Activated CD8-positive, alpha-beta T cell treated with anti-CD3 and anti-CD28 coated beads, Interleukin-2, amount 10 ng/mL, durations not matched to agents 7 days and 5 days (primary cell): ENCODE measurements at regions of chr4 and their contacts with region 1.

Region 1: DNA sequence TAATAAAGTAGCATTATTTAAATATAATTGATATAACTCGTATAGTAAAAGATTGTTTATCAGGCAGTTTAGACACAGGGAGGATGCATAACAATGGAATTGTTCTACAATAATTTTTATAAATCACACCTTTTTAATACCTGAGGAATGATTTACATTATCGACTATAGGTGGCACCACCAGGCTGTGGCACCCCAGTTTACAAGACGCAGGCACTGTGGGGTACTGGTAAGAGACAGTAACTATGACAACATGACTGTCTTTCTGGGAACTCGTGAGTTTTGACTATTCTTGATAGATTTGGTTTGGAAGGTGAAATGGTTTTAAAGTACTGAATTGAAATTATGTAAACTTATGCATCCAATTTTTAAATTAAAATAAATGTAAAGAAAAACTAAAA is 27.1 kb upstream of the STBD1 start:
- DNase-seq: peak; percentile 47
- ATAC-seq: no peak
- H3K4me3 Mint-ChIP-seq: no peak overlapping the region
- H3K27ac Mint-ChIP-seq: no peak overlapping the region
- H3K4me1 Mint-ChIP-seq: peaks cover 8% of the 10 kb centered on the region
- H3K27me3 Mint-ChIP-seq: peaks cover 24% of the 10 kb centered on the region

Region 2: GRCh38 chr4:76293772-76294171 is 14.3 kb after region 1 on chr4:
- CTCF ChIA-PET with region 1: no interaction called
- POLR2A ChIA-PET with region 1: no interaction called
- DNase-seq: no peak
- ATAC-seq: no peak
- H3K4me3 Mint-ChIP-seq: no peak overlapping the region
- H3K27ac Mint-ChIP-seq: no peak overlapping the region
- H3K4me1 Mint-ChIP-seq: no peaks in the 10 kb centered on the region
- H3K27me3 Mint-ChIP-seq: peaks cover 16% of the 10 kb centered on the region

Region 3: DNA sequence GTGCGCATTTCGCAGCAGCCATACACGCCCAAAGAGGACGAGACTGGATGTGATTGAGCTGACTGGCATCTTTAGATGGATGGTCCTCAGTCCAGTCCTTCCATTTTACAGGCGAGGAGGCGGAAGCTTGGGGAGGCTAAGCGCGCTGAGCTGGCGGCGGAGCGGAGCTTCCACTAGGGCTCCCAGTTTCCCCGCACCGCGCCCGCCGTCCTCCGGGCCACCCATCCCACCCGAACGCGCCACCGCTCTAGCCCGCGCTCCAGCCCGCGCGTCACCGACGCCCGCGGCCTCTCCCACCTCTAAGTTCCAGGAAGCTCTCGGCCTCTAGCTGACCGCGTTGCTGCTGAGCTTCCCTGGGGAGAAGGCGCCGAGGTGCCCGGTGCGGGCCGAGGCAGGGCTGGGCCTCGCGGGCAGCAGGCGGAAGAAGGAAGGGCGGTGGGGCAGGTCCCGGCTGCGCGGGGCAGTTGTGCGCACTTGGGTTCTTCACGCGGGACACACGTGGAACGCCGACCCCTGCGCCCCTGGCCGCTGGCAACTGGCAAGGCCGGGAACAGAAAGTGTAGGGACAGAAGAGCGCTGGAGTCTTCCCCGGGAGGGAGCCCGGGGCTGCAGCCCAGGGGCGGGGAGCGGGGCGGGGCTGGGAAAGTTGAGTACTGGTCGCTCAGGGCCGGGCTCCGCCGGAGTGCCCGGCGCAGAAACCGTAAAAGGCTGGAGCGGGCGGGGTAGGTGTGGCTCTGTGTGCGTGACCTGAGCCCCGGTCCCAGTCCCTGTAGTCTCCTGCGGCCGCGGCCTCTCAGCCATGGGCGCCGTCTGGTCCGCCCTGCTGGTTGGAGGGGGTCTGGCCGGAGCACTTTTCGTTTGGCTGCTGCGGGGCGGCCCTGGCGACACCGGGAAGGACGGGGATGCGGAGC is 26.8 kb after region 1 on chr4 and contains the start of gene STBD1:
- CTCF ChIA-PET with region 1: interaction called, 12 read pairs
- POLR2A ChIA-PET with region 1: no interaction called
- DNase-seq: peak; percentile 46
- ATAC-seq: peak; percentile 66
- H3K4me3 Mint-ChIP-seq: peak within 1 kb of the TSS; percentile 64
- H3K27ac Mint-ChIP-seq: peak within 1 kb of the TSS; percentile 79
- H3K4me1 Mint-ChIP-seq: peaks cover 43% of the 10 kb centered on the region
- H3K27me3 Mint-ChIP-seq: peaks cover 26% of the 10 kb centered on the region
- total RNA-seq, gene STBD1: 1.5 to 1.6 TPM